Breast epithelium (tissue), 4 donors: ENCODE measurements at regions of chr12 and their contacts with region 1.

Region 1: DNA sequence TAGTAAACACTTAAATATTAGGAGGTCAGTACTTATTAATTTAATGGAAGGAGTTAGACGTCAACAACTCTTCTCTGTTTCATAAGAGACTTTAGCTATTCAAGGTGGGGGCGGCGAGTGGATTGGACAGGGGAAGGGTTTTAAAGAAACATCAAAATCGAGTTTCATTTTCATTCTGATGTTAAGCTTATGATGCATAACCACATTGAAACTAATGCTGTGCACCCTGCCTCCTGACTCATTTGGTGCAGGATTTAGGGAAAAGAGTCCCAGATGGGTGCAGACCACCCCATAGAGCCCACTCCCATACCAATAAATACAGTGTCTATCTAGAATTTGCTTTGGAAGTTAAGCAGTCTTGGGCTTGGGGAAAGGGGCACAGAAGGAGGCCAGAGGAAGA is 7.4 kb downstream of the ZBTB39 start:
- DNase-seq: no peak
- H3K4me3 ChIP-seq: no peak overlapping the region
- H3K27ac ChIP-seq: no peak overlapping the region
- H3K4me1 ChIP-seq: no peaks in the 10 kb centered on the region
- H3K27me3 ChIP-seq: no peaks in the 10 kb centered on the region
- CTCF ChIP-seq: no peak
- POLR2A ChIP-seq: no peak

Region 2: GRCh38 chr12:56751712-56752598 is 247.0 kb before region 1 on chr12 and contains the start of gene PRIM1:
- intact Hi-C with region 1: loop called (anchors 10 kb)
- DNase-seq: peak; percentile 62 to 77
- H3K4me3 ChIP-seq: peak within 1 kb of the TSS; percentile 71 to 89 (median 74)
- H3K27ac ChIP-seq: peak within 1 kb of the TSS; percentile 73 to 80
- H3K4me1 ChIP-seq: no peaks in the 10 kb centered on the region
- H3K27me3 ChIP-seq: no peaks in the 10 kb centered on the region
- CTCF ChIP-seq: peak in 1 of 3 donors; percentile 24
- POLR2A ChIP-seq: peak; percentile 32
- total RNA-seq, gene PRIM1: 7.9 to 13.0 (median 8.3) TPM

Region 3: DNA sequence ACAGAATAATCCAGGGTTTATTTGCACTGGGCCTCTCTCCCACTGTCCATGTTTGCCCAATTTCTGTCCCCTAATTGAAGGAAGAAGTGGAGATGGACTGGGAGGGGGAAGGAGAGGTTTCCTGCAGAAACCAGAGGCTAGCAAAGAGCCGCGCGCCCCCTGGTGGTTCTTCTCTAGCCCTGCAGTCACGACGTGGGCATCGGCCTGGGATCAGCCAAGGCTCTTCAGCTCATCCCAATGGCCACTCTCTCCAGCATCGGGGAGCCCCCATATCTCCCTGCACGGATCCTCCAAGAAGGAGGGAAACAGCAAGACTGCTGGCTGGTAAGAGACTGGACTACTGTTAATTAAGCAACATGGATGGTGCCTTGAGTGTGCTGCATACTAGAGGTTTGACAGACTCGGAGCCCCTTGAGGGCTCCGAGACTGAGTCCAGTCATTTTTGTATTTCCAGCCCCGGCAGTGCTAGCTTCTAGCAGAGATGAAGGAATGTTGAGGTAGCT is 11.4 kb before region 1 on chr12:
- intact Hi-C with region 1: no loop called
- DNase-seq: peak; percentile 53 to 85
- H3K4me3 ChIP-seq: no peak overlapping the region
- H3K27ac ChIP-seq: no peak overlapping the region
- H3K4me1 ChIP-seq: peaks cover 0 to 6% of the 10 kb centered on the region in 2 donors
- H3K27me3 ChIP-seq: no peaks in the 10 kb centered on the region
- CTCF ChIP-seq: peak; percentile 90 to 96 (median 93)
- POLR2A ChIP-seq: no peak

Region 4: GRCh38 chr12:57127710-57128533 is 128.9 kb after region 1 on chr12 and contains the start of gene LRP1:
- intact Hi-C with region 1: no loop called
- DNase-seq: peak; percentile 78 to 87
- H3K4me3 ChIP-seq: peak within 1 kb of the TSS; percentile 63 to 82 (median 67)
- H3K27ac ChIP-seq: peak within 1 kb of the TSS; percentile 93 to 97
- H3K4me1 ChIP-seq: peaks cover 0 to 3% of the 10 kb centered on the region in 2 donors
- H3K27me3 ChIP-seq: no peaks in the 10 kb centered on the region
- CTCF ChIP-seq: no peak
- POLR2A ChIP-seq: peak; percentile 82
- total RNA-seq, gene LRP1: 102 to 894 (median 240) TPM